ENCODE measurements at regions of chrX and their contacts with region 1.

Region 1: DNA sequence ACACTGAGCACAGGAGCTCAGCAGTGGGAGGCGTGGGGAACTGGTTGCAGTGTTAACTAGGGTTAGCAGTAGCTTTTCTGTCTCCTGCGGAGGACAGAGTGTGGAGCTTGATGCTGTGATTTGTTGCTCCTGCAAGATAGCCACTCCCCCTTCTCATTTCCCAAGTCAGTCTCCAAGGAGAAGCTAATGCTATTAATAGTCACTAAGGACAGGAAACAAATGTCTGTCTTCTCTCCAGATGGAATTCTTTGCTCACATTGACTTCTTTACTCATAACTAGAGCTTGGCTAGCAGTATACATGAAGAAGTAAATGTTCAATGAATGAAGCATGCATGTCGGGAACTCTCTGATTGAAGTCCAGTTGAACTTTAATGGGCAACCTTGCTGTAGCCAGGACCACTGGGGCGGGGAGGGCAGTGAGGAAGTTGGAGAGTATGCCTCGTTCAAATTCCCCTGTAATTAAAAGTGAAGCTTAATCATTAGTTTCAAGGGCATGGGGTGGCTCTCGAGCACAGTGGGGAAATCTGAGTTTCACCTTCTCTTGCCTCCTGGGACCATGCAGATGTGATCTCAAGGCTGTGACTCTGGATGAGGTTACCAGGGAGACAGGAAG is 156.6 kb upstream of the SCML1 start:
- DNase-seq: no peak
- H3K4me3 ChIP-seq: no peak overlapping the region
- H3K27ac ChIP-seq: no peak overlapping the region
- H3K27me3 ChIP-seq: no peaks in the 10 kb centered on the region
- CTCF ChIP-seq: no peak

Region 2: GRCh38 chrX:17590892-17591740 is 10.5 kb after region 1 on chrX:
- CTCF ChIA-PET with region 1: interaction called, 16 read pairs
- POLR2A ChIA-PET with region 1: no interaction called
- DNase-seq: no peak
- H3K4me3 ChIP-seq: peak overlapping the region; percentile 20; the same call in 1 of the 2 replicates
- H3K27ac ChIP-seq: peak overlapping the region; percentile 43
- H3K27me3 ChIP-seq: no peaks in the 10 kb centered on the region
- CTCF ChIP-seq: peak; percentile 76

Measured in AG04450 (cell line).